Right ventricle myocardium inferior (tissue), 1 donor: ENCODE measurements at regions of chr2 and their contacts with region 1.

Region 1: GRCh38 chr2:196076778-196077568 is 8.3 kb upstream of the DNAH7 start:
- DNase-seq: no peak
- ATAC-seq: no peak

Region 2: GRCh38 chr2:196171248-196171871 is 94.4 kb after region 1 on chr2 and contains the start of gene STK17B:
- intact Hi-C with region 1: loop called (anchors 5 kb)
- DNase-seq: peak; percentile 97
- ATAC-seq: peak; percentile 98
- total RNA-seq, gene STK17B: 7.4 TPM

Region 3: GRCh38 chr2:196431957-196432356 is 355.0 kb after region 1 on chr2:
- intact Hi-C with region 1: loop called (anchors 10 kb)
- DNase-seq: no peak
- ATAC-seq: no peak

Region 4: DNA sequence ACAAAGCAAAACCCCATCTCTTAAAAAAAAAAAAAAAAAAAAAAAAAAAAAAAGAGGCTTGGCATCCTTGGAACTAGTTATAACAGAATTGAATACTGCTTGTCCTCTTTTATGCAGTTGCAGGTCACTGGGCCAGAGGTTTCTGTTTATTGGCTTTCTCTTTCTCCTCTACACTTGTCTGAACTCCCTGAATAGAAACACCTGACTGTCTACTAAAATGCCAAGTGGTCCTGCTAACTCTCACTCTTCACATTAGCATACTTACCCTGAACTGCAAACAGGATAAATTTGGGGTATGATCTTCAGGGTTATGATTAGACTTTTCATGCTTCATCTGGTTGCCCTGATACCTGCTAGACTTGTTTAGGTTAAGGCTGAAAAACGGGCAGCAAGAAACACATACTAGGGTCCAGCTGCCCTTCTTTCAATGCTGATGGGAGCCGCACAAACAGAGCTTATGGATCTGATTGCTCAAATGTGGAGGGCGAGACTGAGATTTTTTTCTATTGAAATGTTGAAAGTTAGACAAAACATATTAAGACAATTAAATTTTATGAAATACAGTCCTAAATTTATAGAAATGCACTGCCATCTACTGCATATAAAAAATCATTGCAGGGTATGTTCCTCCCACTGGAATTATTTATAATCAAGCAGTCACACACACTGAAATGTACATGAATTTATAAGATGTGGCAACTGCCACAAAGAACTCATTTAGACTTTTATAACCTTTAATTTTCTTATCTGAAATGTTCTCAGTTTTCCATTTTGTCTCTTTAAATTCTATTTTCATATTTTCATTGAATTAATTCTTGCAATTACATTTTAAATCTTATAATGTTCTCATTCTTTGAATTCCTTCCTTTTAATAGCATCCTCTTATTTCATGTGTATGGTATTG is 681.8 kb after region 1 on chr2:
- intact Hi-C with region 1: loop called (anchors 5 kb)
- DNase-seq: no peak
- ATAC-seq: peak; percentile 59